A549 (cell line): ENCODE measurements at regions of chr12 and their contacts with region 1.

Region 1: GRCh38 chr12:107402041-107403022 is 283.3 kb upstream of the PWP1 start:
- DNase-seq: peak; percentile 47 to 85
- ATAC-seq: peak; percentile 69 to 82; a peak in 5 of 6 replicates
- H3K4me3 ChIP-seq: no peak overlapping the region
- H3K27ac ChIP-seq: peak overlapping the region; percentile 61 to 82
- H3K4me1 ChIP-seq: peaks cover 61% of the 10 kb centered on the region
- CTCF ChIP-seq: peak; percentile 74
- EP300 ChIP-seq: no peak
- POLR2A ChIP-seq: no peak
- RAD21 ChIP-seq: peak; percentile 88 to 89

Region 2: GRCh38 chr12:107126796-107127481 is 275.4 kb before region 1 on chr12:
- CTCF ChIA-PET with region 1: interaction called, 217 read pairs
- POLR2A ChIA-PET with region 1: no interaction called
- DNase-seq: peak in 1 of 2 experiments; percentile 33
- ATAC-seq: peak; percentile 74 to 78; a peak in 5 of 6 replicates
- H3K4me3 ChIP-seq: no peak overlapping the region
- H3K27ac ChIP-seq: no peak overlapping the region
- H3K4me1 ChIP-seq: 0 out of 3 replicates have a peak, but pooled peaks cover under 1% of the 10 kb centered on the region
- CTCF ChIP-seq: peak; percentile 68
- EP300 ChIP-seq: no peak
- POLR2A ChIP-seq: no peak
- RAD21 ChIP-seq: peak; percentile 77 to 82

Region 3: DNA sequence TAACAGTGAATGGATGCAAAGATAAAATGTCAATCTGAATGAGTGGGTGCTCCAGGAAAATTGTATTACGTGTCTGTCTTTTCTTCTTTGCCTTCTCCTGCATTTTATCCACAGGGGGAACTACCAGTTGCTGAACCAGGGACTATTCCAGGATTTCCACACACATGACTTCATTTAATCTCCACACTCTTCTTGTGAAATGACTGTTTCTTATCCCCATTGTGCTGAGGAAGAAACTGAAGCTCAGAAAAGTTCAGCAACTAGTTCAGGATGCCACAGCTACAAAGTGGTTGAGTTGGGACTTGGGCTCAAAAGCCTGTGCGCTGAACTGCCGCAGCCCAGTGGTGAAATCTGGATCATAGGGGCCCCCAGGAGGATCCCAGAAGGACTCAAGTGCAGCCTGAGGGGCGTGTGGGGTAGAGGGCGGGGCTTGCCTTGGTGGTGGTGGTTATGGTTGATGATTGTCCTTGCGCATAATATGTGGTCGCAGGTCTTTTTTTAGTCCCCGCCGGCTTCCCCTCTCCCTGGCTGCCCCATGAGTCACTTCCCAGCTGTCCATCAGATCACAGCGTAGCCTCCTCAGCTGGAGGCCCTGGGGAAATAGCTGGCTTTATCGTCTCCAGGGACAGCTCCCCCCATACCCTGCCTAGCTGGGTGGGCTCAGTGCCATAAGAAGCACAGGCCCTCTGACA is 73.7 kb before region 1 on chr12:
- CTCF ChIA-PET with region 1: interaction called, 29 read pairs
- POLR2A ChIA-PET with region 1: no interaction called
- DNase-seq: peak; percentile 31 to 49
- ATAC-seq: peak; percentile 70 to 73
- H3K4me3 ChIP-seq: no peak overlapping the region; the same call in 2 of the 3 replicates
- H3K27ac ChIP-seq: peak overlapping the region; percentile 48 to 82
- H3K4me1 ChIP-seq: peaks cover 82% of the 10 kb centered on the region
- CTCF ChIP-seq: no peak
- EP300 ChIP-seq: no peak
- POLR2A ChIP-seq: no peak
- RAD21 ChIP-seq: no peak

Region 4: DNA sequence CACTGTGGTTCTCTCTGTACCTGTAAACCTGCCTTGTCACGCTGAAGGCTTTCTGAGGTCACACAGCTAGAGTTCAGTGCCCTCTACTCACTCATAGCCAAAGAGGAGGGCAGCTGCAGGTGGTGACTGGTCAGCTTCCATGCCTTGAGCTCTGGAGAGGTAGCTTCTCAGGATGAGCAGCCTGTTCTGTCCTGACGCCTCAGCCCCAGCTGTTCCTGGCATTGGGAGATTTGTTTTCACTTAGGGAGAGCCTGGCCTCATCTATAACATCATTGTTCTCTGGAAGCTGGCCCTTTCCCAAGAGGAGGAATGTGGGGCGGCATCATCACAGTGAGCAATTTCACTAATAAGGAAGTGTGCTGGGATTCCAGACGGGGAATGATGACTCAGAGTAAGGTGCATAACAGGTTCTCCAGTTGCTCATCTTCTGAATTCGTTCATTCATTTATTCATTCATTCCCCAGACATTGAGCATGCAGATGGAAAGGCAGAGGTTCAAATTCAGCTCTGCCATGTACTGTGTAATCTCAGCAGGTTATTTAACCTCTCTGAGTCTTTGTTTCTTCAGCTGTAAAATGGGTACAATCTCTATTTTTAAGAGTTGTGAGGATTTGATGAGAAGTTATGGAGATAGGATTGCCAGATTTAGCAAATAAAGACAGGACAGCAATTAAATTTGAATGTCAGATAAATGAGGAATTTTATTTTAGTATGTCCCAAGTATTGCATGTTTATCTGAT is 53.2 kb before region 1 on chr12:
- CTCF ChIA-PET with region 1: interaction called, 34 read pairs
- POLR2A ChIA-PET with region 1: interaction called, 5 read pairs
- DNase-seq: peak; percentile 82 to 96
- ATAC-seq: peak; percentile 60 to 77
- H3K4me3 ChIP-seq: peak overlapping the region; percentile 1; the same call in 1 of the 3 replicates
- H3K27ac ChIP-seq: peak overlapping the region; percentile 94 to 96
- H3K4me1 ChIP-seq: peaks cover 85% of the 10 kb centered on the region
- CTCF ChIP-seq: no peak
- EP300 ChIP-seq: peak; percentile 80 to 85; a peak in 3 of 5 replicates
- POLR2A ChIP-seq: no peak
- RAD21 ChIP-seq: peak; percentile 23 to 47

Region 5: GRCh38 chr12:107415071-107415470 is 12.7 kb after region 1 on chr12:
- CTCF ChIA-PET with region 1: interaction called, 13 read pairs
- POLR2A ChIA-PET with region 1: no interaction called
- DNase-seq: peak; percentile 63 to 67
- ATAC-seq: peak; percentile 66 to 83
- H3K4me3 ChIP-seq: no peak overlapping the region
- H3K27ac ChIP-seq: peak overlapping the region; percentile 53 to 77
- H3K4me1 ChIP-seq: peaks cover 56% of the 10 kb centered on the region
- CTCF ChIP-seq: no peak
- EP300 ChIP-seq: no peak
- POLR2A ChIP-seq: no peak
- RAD21 ChIP-seq: peak; percentile 26 to 47; a peak in 3 of 5 replicates